ENCODE measurements at regions of chr19 and their contacts with region 1.

Region 1: DNA sequence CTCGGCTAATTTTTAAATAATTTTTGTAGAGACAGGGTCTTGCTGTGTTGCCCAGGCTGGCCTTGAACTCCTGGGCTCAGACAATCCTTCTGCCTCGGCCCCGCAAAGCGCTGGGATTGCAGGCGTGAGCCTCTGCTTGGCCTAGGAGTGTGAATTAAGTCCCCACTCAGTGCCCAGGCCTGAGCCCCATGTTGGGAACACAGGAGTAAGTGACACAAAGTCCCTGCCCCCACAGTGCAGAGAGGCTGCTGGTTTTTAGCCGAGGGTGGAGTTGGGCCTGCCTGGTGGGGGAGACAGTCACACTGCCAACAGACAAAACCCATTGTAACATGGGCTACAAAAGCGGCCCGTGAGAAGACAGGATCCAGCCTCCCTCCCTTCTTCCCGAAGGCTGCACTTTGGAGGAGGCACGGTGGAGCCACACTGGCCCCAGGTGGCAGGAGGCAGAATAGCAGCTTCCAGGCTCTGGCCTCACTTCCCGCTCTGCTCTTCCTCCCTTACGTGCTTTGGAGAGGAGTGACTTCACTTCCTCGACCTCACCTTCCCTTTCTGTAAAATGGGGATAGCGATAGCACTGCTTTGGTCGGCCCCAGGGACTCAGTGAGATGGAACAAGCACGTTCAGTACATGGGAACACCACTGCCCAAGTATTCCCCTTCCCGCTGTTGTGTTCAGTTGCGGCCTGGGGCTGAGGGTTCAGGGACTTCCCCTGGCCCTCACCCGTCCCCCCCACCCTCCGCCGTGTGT is 15.2 kb upstream of the EHD2 start:
- DNase-seq: peak; percentile 90 to 94
- ATAC-seq: peak; percentile 80 to 88
- H3K4me3 ChIP-seq: no peak overlapping the region
- H3K27ac ChIP-seq: peak overlapping the region; percentile 59 to 77; a peak in 5 of 6 replicates
- H3K4me1 ChIP-seq: peaks cover 4% of the 10 kb centered on the region
- CTCF ChIP-seq: peak; percentile 97
- EP300 ChIP-seq: no peak
- POLR2A ChIP-seq: no peak
- RAD21 ChIP-seq: peak; percentile 98 to 100

Region 2: DNA sequence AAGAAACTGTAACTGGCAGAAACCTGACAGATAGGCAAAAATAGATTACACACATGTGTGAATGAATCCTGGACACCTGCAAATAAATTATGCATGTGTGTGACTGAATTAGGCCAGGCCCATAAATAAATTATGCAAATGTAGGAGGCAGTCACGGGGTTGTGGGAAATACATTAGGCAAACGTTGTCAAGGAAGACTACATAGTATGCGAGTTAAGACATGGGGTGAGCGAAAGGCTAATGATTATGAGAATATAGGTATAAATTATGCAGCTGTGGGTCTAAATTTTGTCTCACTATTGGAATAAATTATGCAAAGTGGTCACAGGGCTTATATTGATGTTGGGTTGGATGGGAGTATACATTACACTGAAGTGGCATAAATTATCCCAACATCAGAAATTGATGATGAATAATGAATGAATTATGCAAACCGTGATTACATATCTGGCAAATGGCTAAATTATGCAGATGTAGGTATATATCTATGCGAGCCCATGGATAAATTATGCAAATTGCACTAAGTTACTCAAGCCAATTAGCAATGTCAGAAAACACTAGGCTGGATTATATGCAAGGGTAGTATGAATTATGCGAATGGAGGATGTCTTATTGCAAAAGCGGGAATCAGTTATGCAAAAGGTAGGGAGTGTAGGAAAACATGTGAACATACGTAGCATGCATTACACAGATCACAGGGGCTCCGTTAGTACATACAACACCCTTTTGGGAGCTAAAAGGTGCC is 233.2 kb before region 1 on chr19:
- CTCF ChIA-PET with region 1: interaction called, 14 read pairs
- POLR2A ChIA-PET with region 1: no interaction called
- DNase-seq: no peak
- ATAC-seq: no peak
- H3K4me3 ChIP-seq: no peak overlapping the region
- H3K27ac ChIP-seq: no peak overlapping the region
- H3K4me1 ChIP-seq: peaks cover 7% of the 10 kb centered on the region; the same call in 1 of the 3 replicates
- CTCF ChIP-seq: no peak
- EP300 ChIP-seq: no peak
- POLR2A ChIP-seq: no peak
- RAD21 ChIP-seq: no peak

Region 3: DNA sequence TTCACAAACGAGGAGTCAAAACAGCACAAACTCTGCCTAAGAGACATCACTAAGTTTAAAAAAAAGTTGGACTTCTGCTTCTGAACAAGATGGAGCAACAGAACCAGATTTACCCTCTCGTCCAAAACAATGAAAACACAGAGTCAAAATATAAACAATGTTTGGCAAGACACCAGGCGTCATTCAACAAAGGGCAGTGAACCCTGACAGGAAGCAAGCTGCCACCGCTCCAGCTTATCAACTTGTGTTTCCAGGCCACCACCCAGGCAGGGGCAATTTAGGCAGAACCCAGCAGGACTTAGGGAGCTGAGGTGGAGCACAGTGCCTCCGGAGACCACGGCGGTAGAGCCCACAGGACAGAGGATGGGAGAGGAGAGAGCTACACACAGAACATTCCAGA is 174.6 kb before region 1 on chr19:
- CTCF ChIA-PET with region 1: interaction called, 20 read pairs
- POLR2A ChIA-PET with region 1: no interaction called
- DNase-seq: no peak
- ATAC-seq: no peak
- H3K4me3 ChIP-seq: no peak overlapping the region
- H3K27ac ChIP-seq: no peak overlapping the region
- H3K4me1 ChIP-seq: peaks cover 7% of the 10 kb centered on the region; the same call in 1 of the 3 replicates
- CTCF ChIP-seq: no peak
- EP300 ChIP-seq: no peak
- POLR2A ChIP-seq: no peak
- RAD21 ChIP-seq: no peak

Region 4: GRCh38 chr19:47623921-47624391 is 74.1 kb before region 1 on chr19:
- CTCF ChIA-PET with region 1: interaction called, 13 read pairs
- POLR2A ChIA-PET with region 1: no interaction called
- DNase-seq: no peak
- ATAC-seq: no peak; a peak in 1 of 6 replicates
- H3K4me3 ChIP-seq: no peak overlapping the region
- H3K27ac ChIP-seq: peak overlapping the region in 1 of 2 experiments; percentile 11; a peak in 1 of 6 replicates
- H3K4me1 ChIP-seq: peaks cover 22% of the 10 kb centered on the region; the same call in 2 of the 3 replicates
- CTCF ChIP-seq: no peak
- EP300 ChIP-seq: no peak
- POLR2A ChIP-seq: no peak
- RAD21 ChIP-seq: no peak

Region 5: GRCh38 chr19:47745010-47745901 is 47.2 kb after region 1 on chr19 and contains the start of gene NOP53:
- CTCF ChIA-PET with region 1: interaction called, 1,389 read pairs
- POLR2A ChIA-PET with region 1: no interaction called
- DNase-seq: peak; percentile 99
- ATAC-seq: peak; percentile 64 to 75
- H3K4me3 ChIP-seq: peak within 1 kb of the TSS; percentile 56
- H3K27ac ChIP-seq: peak within 1 kb of the TSS; percentile 95 to 96
- H3K4me1 ChIP-seq: peaks cover 33% of the 10 kb centered on the region
- CTCF ChIP-seq: no peak
- EP300 ChIP-seq: no peak
- POLR2A ChIP-seq: peak; percentile 76
- RAD21 ChIP-seq: no peak
- polyA plus RNA-seq, gene NOP53: 169 and 182 TPM in 2 replicates